Uterus (tissue), 4 donors: ENCODE measurements at regions of chr4 and their contacts with region 1.

Region 1: DNA sequence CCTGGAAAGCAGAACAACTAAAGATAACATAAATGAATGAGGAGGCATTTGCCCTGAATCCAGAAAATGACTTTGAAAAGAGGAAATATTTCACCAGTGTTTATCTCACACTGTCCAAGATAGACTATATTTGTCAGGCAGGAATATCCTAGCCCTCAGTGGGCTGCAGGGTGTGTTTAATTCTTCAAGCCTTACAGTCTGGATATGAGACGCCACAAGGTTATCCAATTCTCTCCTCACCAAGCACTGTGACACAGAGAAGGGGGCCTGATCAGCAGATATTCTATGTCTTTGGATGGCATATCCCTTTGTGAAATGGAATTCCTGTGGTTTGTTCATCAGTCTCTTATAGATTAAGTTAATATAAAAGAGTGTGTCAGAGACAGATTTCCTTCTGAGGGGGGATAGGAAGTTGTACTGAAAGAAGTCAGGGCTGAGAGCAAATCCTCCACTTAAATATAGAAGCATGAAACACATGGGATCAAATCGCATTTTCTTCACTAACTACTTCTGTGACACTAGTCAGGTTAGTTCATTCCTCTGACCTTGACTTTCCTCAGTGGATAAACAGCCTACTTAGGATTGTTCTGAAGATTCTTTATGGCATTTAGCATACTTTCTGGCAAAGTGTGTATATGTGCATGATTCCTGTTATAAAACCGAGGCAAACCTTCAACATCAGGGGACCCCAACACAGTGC is 6.8 kb upstream of the G3BP2 start:
- DNase-seq: no peak
- H3K4me3 ChIP-seq: no peak overlapping the region
- H3K27ac ChIP-seq: no peak overlapping the region
- H3K4me1 ChIP-seq: no peaks in the 10 kb centered on the region
- H3K27me3 ChIP-seq: no peaks in the 10 kb centered on the region
- CTCF ChIP-seq: no peak
- POLR2A ChIP-seq: no peak

Region 2: DNA sequence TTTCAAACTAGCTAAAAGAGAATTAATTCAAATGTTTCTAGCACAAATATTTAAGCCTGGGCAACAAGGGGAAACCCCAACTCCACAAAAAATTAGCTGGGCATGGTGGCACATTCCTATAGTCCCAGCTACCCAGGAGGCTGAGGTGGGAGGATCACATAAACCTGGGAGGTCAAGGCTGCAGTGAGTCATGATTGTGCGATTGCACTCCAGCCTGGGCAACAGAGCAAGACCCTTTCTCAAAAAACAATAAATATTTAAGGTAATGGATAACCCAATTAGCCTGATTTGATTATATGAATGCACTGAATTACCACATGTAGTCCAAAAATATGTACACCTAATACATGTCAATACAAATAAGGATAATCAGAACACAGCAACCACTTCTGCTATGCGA is 180.1 kb before region 1 on chr4:
- intact Hi-C with region 1: loop called (anchors 5 kb)
- DNase-seq: no peak
- H3K4me3 ChIP-seq: no peak overlapping the region
- H3K27ac ChIP-seq: no peak overlapping the region
- H3K4me1 ChIP-seq: peaks cover 0 to 7% of the 10 kb centered on the region in 2 donors
- H3K27me3 ChIP-seq: no peaks in the 10 kb centered on the region
- CTCF ChIP-seq: no peak
- POLR2A ChIP-seq: no peak

Region 3: DNA sequence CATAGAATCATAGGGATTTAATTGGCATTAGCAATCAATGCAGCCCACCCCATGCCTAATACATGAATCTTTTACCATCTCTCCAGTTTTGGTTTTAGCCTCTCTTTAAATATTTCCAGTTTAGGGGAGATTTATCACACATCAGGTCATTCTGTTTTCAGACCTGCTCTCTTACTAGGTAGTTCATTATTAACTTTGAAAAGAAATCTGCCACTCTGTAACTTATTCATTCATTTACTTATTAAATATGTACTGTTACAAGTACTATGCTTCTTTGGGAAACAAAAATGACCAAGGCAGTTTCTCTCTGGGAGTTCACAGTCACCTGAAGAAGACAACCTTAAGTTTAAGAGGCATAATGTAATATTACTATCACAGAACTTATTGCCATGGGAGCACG is 106.5 kb after region 1 on chr4:
- intact Hi-C with region 1: no loop called
- DNase-seq: no peak
- H3K4me3 ChIP-seq: no peak overlapping the region
- H3K27ac ChIP-seq: no peak overlapping the region
- H3K4me1 ChIP-seq: no peaks in the 10 kb centered on the region
- H3K27me3 ChIP-seq: no peaks in the 10 kb centered on the region
- CTCF ChIP-seq: no peak
- POLR2A ChIP-seq: no peak